ENCODE measurements at regions of chr3 and their contacts with region 1.

Region 1: GRCh38 chr3:64971602-64972001 is 283.8 kb upstream of the ADAMTS9 start:
- DNase-seq: no peak
- H3K4me3 ChIP-seq: no peak overlapping the region
- H3K27ac ChIP-seq: no peak overlapping the region
- H3K4me1 ChIP-seq: peaks cover 11% of the 10 kb centered on the region
- H3K27me3 ChIP-seq: no peaks in the 10 kb centered on the region
- CTCF ChIP-seq: no peak

Region 2: GRCh38 chr3:63975723-63976122 is 995.9 kb before region 1 on chr3:
- CTCF ChIA-PET with region 1: no interaction called
- POLR2A ChIA-PET with region 1: interaction called, 15 read pairs
- intact Hi-C with region 1: no loop called
- DNase-seq: no peak
- H3K4me3 ChIP-seq: no peak overlapping the region
- H3K27ac ChIP-seq: no peak overlapping the region
- H3K4me1 ChIP-seq: peaks cover 16% of the 10 kb centered on the region
- H3K27me3 ChIP-seq: no peaks in the 10 kb centered on the region
- CTCF ChIP-seq: no peak

Measured in PC-9 (cell line).